ENCODE measurements at regions of chr1 and their contacts with region 1.

Region 1: DNA sequence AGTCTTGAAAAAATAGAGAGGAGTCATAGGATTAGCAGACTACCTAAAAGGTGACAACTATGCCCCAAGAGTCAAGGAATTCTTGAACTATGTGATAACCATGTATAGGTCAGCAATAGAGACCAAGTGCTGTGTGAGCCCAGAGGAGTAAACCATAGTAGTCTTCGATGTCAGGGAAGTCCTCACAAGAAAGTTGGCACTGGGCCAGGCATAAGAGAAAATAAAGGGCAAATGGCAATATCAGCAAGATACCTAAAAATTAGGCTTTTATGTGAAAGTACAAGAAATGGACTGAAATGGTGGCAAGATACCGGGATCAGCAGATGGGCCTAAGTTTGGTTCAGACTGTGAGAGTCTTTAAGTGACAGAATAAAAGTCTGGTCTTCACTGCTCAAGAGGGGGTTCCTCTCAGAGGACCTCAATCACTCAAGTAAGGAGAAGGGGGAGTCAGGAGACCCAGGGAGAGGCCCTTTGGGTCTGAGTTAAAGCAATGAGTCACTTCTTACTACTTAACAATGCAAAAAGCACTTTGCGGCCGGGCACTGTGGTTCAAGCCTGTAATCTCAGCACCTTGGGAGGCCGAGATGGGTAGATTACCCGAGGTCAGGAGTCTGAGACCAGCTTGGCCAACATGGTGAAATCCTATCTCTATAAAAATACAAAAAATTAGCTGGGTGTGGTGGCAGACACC is 95.0 kb downstream of the TEX35 start:
- DNase-seq: peak; percentile 72
- ATAC-seq: peak; percentile 83
- H3K4me3 ChIP-seq: no peak overlapping the region; the same call in 1 of the 2 replicates
- H3K27ac ChIP-seq: peak overlapping the region; percentile 50
- H3K4me1 ChIP-seq: peaks cover 41% of the 10 kb centered on the region
- H3K27me3 ChIP-seq: no peaks in the 10 kb centered on the region
- CTCF ChIP-seq: no peak
- EP300 ChIP-seq: 0 out of 4 replicates have a peak, but pooled peaks of 1 of the 2 experiments have one; percentile 21
- POLR2A ChIP-seq: no peak
- RAD21 ChIP-seq: no peak

Region 2: GRCh38 chr1:178528072-178528952 is 79.6 kb before region 1 on chr1:
- CTCF ChIA-PET with region 1: no interaction called
- POLR2A ChIA-PET with region 1: no interaction called
- RAD21 ChIA-PET with region 1: no interaction called
- SMC1A ChIA-PET with region 1: no interaction called
- in situ Hi-C with region 1: no loop called
- intact Hi-C with region 1: no loop called
- DNase-seq: no peak
- ATAC-seq: no peak
- H3K4me3 ChIP-seq: no peak overlapping the region
- H3K27ac ChIP-seq: no peak overlapping the region
- H3K4me1 ChIP-seq: no peaks in the 10 kb centered on the region
- H3K27me3 ChIP-seq: no peaks in the 10 kb centered on the region
- CTCF ChIP-seq: no peak
- EP300 ChIP-seq: no peak
- POLR2A ChIP-seq: no peak
- RAD21 ChIP-seq: no peak

Region 3: GRCh38 chr1:178566187-178566586 is 41.7 kb before region 1 on chr1:
- CTCF ChIA-PET with region 1: no interaction called
- POLR2A ChIA-PET with region 1: no interaction called
- RAD21 ChIA-PET with region 1: no interaction called
- SMC1A ChIA-PET with region 1: interaction called, 7 read pairs
- in situ Hi-C with region 1: no loop called
- intact Hi-C with region 1: loop called (anchors 5 kb)
- DNase-seq: peak; percentile 56
- ATAC-seq: peak; percentile 96
- H3K4me3 ChIP-seq: no peak overlapping the region
- H3K27ac ChIP-seq: no peak overlapping the region
- H3K4me1 ChIP-seq: no peaks in the 10 kb centered on the region; the same call in 1 of the 2 replicates
- H3K27me3 ChIP-seq: no peaks in the 10 kb centered on the region
- CTCF ChIP-seq: no peak
- EP300 ChIP-seq: peak; percentile 15 to 30; a peak in 2 of 4 replicates
- POLR2A ChIP-seq: no peak
- RAD21 ChIP-seq: no peak

Region 4: GRCh38 chr1:178575611-178576331 is 32.1 kb before region 1 on chr1:
- CTCF ChIA-PET with region 1: interaction called, 11 read pairs
- POLR2A ChIA-PET with region 1: interaction called, 6 read pairs
- RAD21 ChIA-PET with region 1: interaction called, 17 read pairs
- SMC1A ChIA-PET with region 1: interaction called, 77 read pairs
- in situ Hi-C with region 1: no loop called
- intact Hi-C with region 1: no loop called
- DNase-seq: peak; percentile 19
- ATAC-seq: peak; percentile 21; the same call in 1 of the 3 replicates
- H3K4me3 ChIP-seq: peak overlapping the region; percentile 34; the same call in 1 of the 2 replicates
- H3K27ac ChIP-seq: peak overlapping the region; percentile 9; the same call in 1 of the 2 replicates
- H3K4me1 ChIP-seq: peaks cover 61% of the 10 kb centered on the region
- H3K27me3 ChIP-seq: no peaks in the 10 kb centered on the region
- CTCF ChIP-seq: no peak
- EP300 ChIP-seq: no peak
- POLR2A ChIP-seq: no peak
- RAD21 ChIP-seq: no peak

Region 5: GRCh38 chr1:178581351-178582303 is 26.2 kb before region 1 on chr1:
- CTCF ChIA-PET with region 1: interaction called, 11 read pairs
- POLR2A ChIA-PET with region 1: interaction called, 6 read pairs
- RAD21 ChIA-PET with region 1: interaction called, 17 read pairs
- SMC1A ChIA-PET with region 1: interaction called, 77 read pairs
- in situ Hi-C with region 1: no loop called
- intact Hi-C with region 1: no loop called
- DNase-seq: peak; percentile 72
- ATAC-seq: peak; percentile 84
- H3K4me3 ChIP-seq: peak overlapping the region; percentile 46; the same call in 1 of the 2 replicates
- H3K27ac ChIP-seq: peak overlapping the region; percentile 62
- H3K4me1 ChIP-seq: peaks cover 61% of the 10 kb centered on the region
- H3K27me3 ChIP-seq: no peaks in the 10 kb centered on the region
- CTCF ChIP-seq: no peak
- EP300 ChIP-seq: no peak
- POLR2A ChIP-seq: no peak
- RAD21 ChIP-seq: no peak

Region 6: GRCh38 chr1:178625701-178626100 is 17.8 kb after region 1 on chr1:
- CTCF ChIA-PET with region 1: interaction called, 4 read pairs
- POLR2A ChIA-PET with region 1: interaction called, 3 read pairs
- RAD21 ChIA-PET with region 1: interaction called, 3 read pairs
- SMC1A ChIA-PET with region 1: interaction called, 10 read pairs
- in situ Hi-C with region 1: no loop called
- intact Hi-C with region 1: no loop called
- DNase-seq: no peak
- ATAC-seq: no peak
- H3K4me3 ChIP-seq: no peak overlapping the region
- H3K27ac ChIP-seq: no peak overlapping the region
- H3K4me1 ChIP-seq: no peaks in the 10 kb centered on the region
- H3K27me3 ChIP-seq: no peaks in the 10 kb centered on the region
- CTCF ChIP-seq: no peak
- EP300 ChIP-seq: no peak
- POLR2A ChIP-seq: no peak
- RAD21 ChIP-seq: no peak

Region 7: GRCh38 chr1:178664278-178664677 is 56.4 kb after region 1 on chr1:
- CTCF ChIA-PET with region 1: interaction called, 5 read pairs
- POLR2A ChIA-PET with region 1: interaction called, 6 read pairs
- RAD21 ChIA-PET with region 1: interaction called, 16 read pairs
- SMC1A ChIA-PET with region 1: interaction called, 20 read pairs
- in situ Hi-C with region 1: no loop called
- intact Hi-C with region 1: loop called (anchors 5 kb)
- DNase-seq: peak; percentile 79
- ATAC-seq: peak; percentile 80
- H3K4me3 ChIP-seq: no peak overlapping the region
- H3K27ac ChIP-seq: no peak overlapping the region
- H3K4me1 ChIP-seq: peaks cover 30% of the 10 kb centered on the region
- H3K27me3 ChIP-seq: no peaks in the 10 kb centered on the region
- CTCF ChIP-seq: no peak
- EP300 ChIP-seq: no peak
- POLR2A ChIP-seq: no peak
- RAD21 ChIP-seq: no peak

Region 8: GRCh38 chr1:178725603-178726517 is 118.0 kb after region 1 on chr1:
- CTCF ChIA-PET with region 1: interaction called, 4 read pairs
- POLR2A ChIA-PET with region 1: no interaction called
- RAD21 ChIA-PET with region 1: interaction called, 6 read pairs
- SMC1A ChIA-PET with region 1: interaction called, 5 read pairs
- in situ Hi-C with region 1: no loop called
- intact Hi-C with region 1: loop called (anchors 5 kb)
- DNase-seq: peak; percentile 32
- ATAC-seq: peak; percentile 75
- H3K4me3 ChIP-seq: peak overlapping the region; percentile 69
- H3K27ac ChIP-seq: no peak overlapping the region; the same call in 1 of the 2 replicates
- H3K4me1 ChIP-seq: no peaks in the 10 kb centered on the region
- H3K27me3 ChIP-seq: peaks cover 0 to 4% of the 10 kb centered on the region in 2 experiments; a peak in 2 of 4 replicates
- CTCF ChIP-seq: no peak
- EP300 ChIP-seq: no peak
- POLR2A ChIP-seq: no peak
- RAD21 ChIP-seq: no peak